ENCODE measurements at regions of chr15 and their contacts with region 1.

Region 1: GRCh38 chr15:85296615-85297402 is 83.6 kb upstream of the AKAP13 start:
- DNase-seq: peak; percentile 77
- CTCF ChIP-seq: peak; percentile 78

Region 2: DNA sequence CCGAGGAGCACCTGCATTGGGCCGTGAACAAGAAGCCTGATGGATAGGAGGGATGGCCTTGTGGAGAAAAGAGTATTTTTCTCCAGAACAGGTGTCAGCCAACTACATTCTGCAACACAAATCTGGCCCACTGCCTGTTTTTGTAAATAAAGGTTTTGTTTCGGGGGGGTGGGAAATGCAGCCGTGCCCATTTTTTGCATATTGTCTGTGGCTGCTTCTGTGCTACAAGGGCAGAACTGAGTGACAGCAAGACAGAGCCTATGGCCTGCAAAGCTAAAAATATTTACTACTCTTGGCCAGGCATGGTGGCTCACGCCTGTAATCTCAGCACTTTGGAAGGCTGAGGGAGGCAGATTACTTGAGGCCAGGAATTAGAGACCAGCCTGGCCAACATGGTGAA is 12.3 kb before region 1 on chr15:
- CTCF ChIA-PET with region 1: interaction called, 21 read pairs
- POLR2A ChIA-PET with region 1: no interaction called
- DNase-seq: peak; percentile 34
- CTCF ChIP-seq: no peak

Region 3: GRCh38 chr15:85318048-85318731 is 21.4 kb after region 1 on chr15:
- CTCF ChIA-PET with region 1: interaction called, 28 read pairs
- POLR2A ChIA-PET with region 1: no interaction called
- DNase-seq: peak; percentile 68
- CTCF ChIP-seq: peak; percentile 19

Region 4: DNA sequence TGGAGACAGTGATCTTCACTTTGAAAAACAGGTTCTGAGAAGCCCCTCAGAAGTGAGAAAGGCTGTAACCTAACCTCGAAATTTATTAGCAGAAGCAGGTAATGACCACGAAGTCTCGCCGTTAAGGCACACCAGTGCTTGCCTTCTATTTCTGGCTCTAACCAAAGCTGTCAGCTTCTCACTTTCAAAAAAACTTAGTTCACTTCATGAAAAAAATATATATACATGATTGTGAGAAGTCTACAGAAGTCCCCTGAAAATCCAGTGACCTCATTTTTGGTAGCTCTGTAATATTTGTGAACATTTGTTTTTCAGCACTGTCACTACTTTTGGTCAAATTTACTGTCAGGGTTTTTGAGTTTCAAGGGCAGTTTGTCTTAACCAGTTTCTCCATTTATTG is 64.5 kb after region 1 on chr15:
- CTCF ChIA-PET with region 1: interaction called, 13 read pairs
- POLR2A ChIA-PET with region 1: no interaction called
- DNase-seq: peak; percentile 70
- CTCF ChIP-seq: no peak

Region 5: DNA sequence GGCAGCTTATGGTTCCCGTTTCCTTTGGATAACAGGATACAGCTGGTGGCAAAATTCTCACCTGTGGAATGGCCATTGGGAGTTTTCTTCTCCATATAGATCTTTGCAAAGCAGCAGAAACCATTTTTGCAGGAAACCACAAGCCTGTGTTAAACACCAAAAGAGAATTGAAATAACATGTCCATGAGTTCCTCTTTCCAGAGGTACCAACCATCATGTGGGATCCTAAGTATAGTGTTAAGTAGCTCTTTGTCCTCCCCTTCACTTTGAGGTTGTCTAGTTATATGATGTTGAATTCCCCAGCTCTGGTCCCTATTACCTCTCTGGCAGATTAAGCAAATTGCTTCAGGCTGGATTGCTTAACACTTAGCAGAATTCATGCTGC is 178.5 kb after region 1 on chr15:
- CTCF ChIA-PET with region 1: interaction called, 17 read pairs
- POLR2A ChIA-PET with region 1: no interaction called
- DNase-seq: peak; percentile 31
- CTCF ChIP-seq: no peak

Region 6: GRCh38 chr15:85840065-85840801 is 543.4 kb after region 1 on chr15:
- CTCF ChIA-PET with region 1: interaction called, 13 read pairs
- POLR2A ChIA-PET with region 1: no interaction called
- DNase-seq: peak; percentile 88
- CTCF ChIP-seq: peak; percentile 94

Measured in GM10248 (cell line).